B cell (primary cell): ENCODE measurements at regions of chr1 and their contacts with region 1.

Region 1: DNA sequence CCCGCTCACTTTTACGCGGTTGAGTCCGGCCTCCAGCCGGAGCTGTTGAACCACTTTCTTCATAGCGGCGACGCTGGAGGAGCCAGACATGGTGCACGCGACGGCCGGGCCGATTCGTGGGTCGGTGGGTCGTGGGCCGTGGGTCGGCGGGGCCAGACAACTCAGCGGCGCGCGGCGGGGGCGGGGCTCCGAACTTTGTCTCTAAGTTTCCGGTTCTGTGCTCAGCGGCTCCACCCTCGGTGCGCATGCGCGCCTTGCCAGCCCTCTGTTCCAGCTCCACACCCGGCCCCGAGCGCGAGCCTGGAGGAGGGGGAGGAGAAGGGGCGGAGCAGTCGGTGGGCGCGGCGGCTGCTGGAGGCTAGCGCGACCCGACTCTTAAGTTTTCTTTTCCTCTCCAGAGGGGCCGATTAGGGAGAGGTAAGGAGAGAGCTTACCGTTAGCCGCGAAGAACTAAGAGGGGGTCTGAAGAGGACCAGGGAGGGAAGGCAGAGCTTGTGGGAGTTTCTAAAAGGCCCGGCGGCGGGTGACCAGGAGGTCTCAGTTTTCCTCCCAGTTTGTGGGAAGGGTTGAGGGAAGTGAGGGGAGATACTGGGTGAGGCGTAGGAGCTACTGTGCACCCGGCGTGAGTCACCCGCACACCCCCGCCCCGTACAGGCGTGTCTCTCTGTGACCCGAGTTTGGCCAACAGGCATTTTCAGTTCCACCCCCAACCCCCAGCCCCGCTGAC is at the starts of genes GNG5 and SPATA1:
- DNase-seq: peak; percentile 98
- ATAC-seq: peak; percentile 88
- H3K4me3 ChIP-seq: peak within 1 kb of the TSS; percentile 82 to 98 (median 90)
- H3K4me3 Mint-ChIP-seq: peak within 1 kb of the TSS; percentile 95
- H3K27ac ChIP-seq: peak within 1 kb of the TSS; percentile 82 to 89
- H3K27ac Mint-ChIP-seq: peak within 1 kb of the TSS; percentile 98
- H3K4me1 ChIP-seq: peaks cover 23 to 27% of the 10 kb centered on the region in 2 donors
- H3K4me1 Mint-ChIP-seq: peaks cover 35% of the 10 kb centered on the region
- H3K27me3 ChIP-seq: no peaks in the 10 kb centered on the region
- H3K27me3 Mint-ChIP-seq: no peaks in the 10 kb centered on the region
- CTCF ChIP-seq: no peak
- total RNA-seq, gene GNG5: 36.0 and 41.6 TPM in 2 replicates
- total RNA-seq, gene SPATA1: 6.4 and 8.6 TPM in 2 replicates

Region 2: GRCh38 chr1:83860490-83861221 is 645.5 kb before region 1 on chr1:
- CTCF ChIA-PET with region 1: no interaction called
- POLR2A ChIA-PET with region 1: no interaction called
- intact Hi-C with region 1: no loop called
- DNase-seq: peak; percentile 80
- ATAC-seq: peak; percentile 85
- H3K4me3 ChIP-seq: peak overlapping the region; percentile 21 to 86 (median 75)
- H3K4me3 Mint-ChIP-seq: peak overlapping the region; percentile 84
- H3K27ac ChIP-seq: peak overlapping the region; percentile 73 to 94
- H3K27ac Mint-ChIP-seq: peak overlapping the region; percentile 84
- H3K4me1 ChIP-seq: peaks cover 2 to 8% of the 10 kb centered on the region in 2 donors
- H3K4me1 Mint-ChIP-seq: peaks cover 9% of the 10 kb centered on the region
- H3K27me3 ChIP-seq: no peaks in the 10 kb centered on the region
- H3K27me3 Mint-ChIP-seq: no peaks in the 10 kb centered on the region
- CTCF ChIP-seq: peak; percentile 86

Region 3: DNA sequence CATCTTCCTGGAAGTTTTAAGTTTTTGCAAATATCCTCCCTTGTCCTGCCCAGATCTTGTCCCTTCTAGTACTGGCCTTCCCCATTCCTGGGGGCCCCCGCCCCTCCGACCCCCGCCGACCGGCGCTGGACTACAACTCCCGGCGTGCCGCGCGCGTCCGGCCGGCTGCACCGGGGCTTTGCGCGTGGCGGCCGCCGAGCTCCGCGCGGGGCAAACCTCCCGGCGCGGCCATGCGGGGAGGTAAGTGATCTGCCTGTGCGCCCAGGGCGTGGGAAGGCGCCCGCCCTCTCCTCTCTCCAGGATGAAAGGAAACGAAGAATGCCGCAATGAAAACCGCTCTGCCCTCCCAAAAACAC is 207.9 kb before region 1 on chr1:
- CTCF ChIA-PET with region 1: no interaction called
- POLR2A ChIA-PET with region 1: no interaction called
- intact Hi-C with region 1: loop called (anchors 1 kb)
- DNase-seq: no peak
- ATAC-seq: peak; percentile 87
- H3K4me3 ChIP-seq: peak overlapping the region; percentile 66 to 86 (median 84)
- H3K4me3 Mint-ChIP-seq: peak overlapping the region; percentile 94
- H3K27ac ChIP-seq: no peak overlapping the region
- H3K27ac Mint-ChIP-seq: peak overlapping the region; percentile 69
- H3K4me1 ChIP-seq: peaks cover 31 to 32% of the 10 kb centered on the region in 2 donors
- H3K4me1 Mint-ChIP-seq: peaks cover 36% of the 10 kb centered on the region
- H3K27me3 ChIP-seq: peaks cover 0 to 15% (median 9%) of the 10 kb centered on the region in 4 experiments
- H3K27me3 Mint-ChIP-seq: peaks cover 20% of the 10 kb centered on the region
- CTCF ChIP-seq: no peak

Region 4: GRCh38 chr1:84442256-84442655 is 63.9 kb before region 1 on chr1:
- CTCF ChIA-PET with region 1: no interaction called
- POLR2A ChIA-PET with region 1: no interaction called
- intact Hi-C with region 1: loop called (anchors 1 kb)
- DNase-seq: peak; percentile 80
- ATAC-seq: peak; percentile 94
- H3K4me3 ChIP-seq: no peak overlapping the region
- H3K4me3 Mint-ChIP-seq: no peak overlapping the region
- H3K27ac ChIP-seq: no peak overlapping the region
- H3K27ac Mint-ChIP-seq: no peak overlapping the region
- H3K4me1 ChIP-seq: peaks cover 18 to 23% of the 10 kb centered on the region in 2 donors
- H3K4me1 Mint-ChIP-seq: peaks cover 18% of the 10 kb centered on the region
- H3K27me3 ChIP-seq: peaks cover 0 to 4% (median 0%) of the 10 kb centered on the region in 4 experiments
- H3K27me3 Mint-ChIP-seq: peaks cover 8% of the 10 kb centered on the region
- CTCF ChIP-seq: peak; percentile 73

Region 5: GRCh38 chr1:84541679-84542078 is 35.5 kb after region 1 on chr1:
- CTCF ChIA-PET with region 1: no interaction called
- POLR2A ChIA-PET with region 1: no interaction called
- intact Hi-C with region 1: loop called (anchors 5 kb)
- DNase-seq: peak; percentile 8
- ATAC-seq: no peak
- H3K4me3 ChIP-seq: no peak overlapping the region
- H3K4me3 Mint-ChIP-seq: no peak overlapping the region
- H3K27ac ChIP-seq: no peak overlapping the region
- H3K27ac Mint-ChIP-seq: no peak overlapping the region
- H3K4me1 ChIP-seq: peaks cover 0 to 2% of the 10 kb centered on the region in 2 donors
- H3K4me1 Mint-ChIP-seq: peaks cover 13% of the 10 kb centered on the region
- H3K27me3 ChIP-seq: no peaks in the 10 kb centered on the region
- H3K27me3 Mint-ChIP-seq: no peaks in the 10 kb centered on the region
- CTCF ChIP-seq: no peak

Region 6: DNA sequence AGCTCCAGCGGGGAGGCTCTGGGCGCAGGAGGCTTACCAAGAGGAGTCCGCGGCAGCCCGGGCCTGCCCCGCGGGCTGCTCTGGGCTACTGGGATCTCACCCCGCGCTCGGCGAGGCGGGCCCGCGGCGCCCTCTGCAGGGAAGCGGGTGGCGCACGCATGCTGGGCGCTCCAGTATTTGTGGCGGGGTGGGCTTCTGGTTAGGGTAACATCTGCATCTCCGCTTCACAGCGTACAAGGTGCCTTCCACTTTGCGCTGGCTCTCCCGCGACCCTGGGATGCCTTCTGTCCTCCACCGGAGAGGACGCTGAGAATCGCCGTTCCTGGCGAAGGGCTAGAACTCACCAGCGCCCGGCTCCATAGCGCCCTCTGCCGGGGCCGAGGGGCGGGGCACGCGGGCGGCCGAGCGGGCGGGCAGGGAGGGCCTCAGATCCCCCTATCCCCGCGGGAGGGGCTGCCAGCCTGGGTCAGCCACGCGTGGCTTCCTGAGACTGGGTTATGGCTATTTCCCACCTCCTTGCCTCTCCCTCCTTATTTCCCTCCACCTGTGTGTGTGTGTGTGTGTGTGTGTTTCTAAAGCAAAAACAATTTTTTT is 114.7 kb after region 1 on chr1:
- CTCF ChIA-PET with region 1: interaction called, 4 read pairs
- POLR2A ChIA-PET with region 1: interaction called, 3 read pairs
- intact Hi-C with region 1: loop called (anchors 1 kb)
- DNase-seq: peak; percentile 90
- ATAC-seq: peak; percentile 92
- H3K4me3 ChIP-seq: peak overlapping the region in 4 of 5 experiments; percentile 59 to 84 (median 72)
- H3K4me3 Mint-ChIP-seq: peak overlapping the region; percentile 96
- H3K27ac ChIP-seq: no peak overlapping the region
- H3K27ac Mint-ChIP-seq: peak overlapping the region; percentile 69
- H3K4me1 ChIP-seq: peaks cover 0 to 4% of the 10 kb centered on the region in 2 donors
- H3K4me1 Mint-ChIP-seq: peaks cover 6% of the 10 kb centered on the region
- H3K27me3 ChIP-seq: peaks cover 0 to 5% (median 0%) of the 10 kb centered on the region in 4 experiments
- H3K27me3 Mint-ChIP-seq: peaks cover 6% of the 10 kb centered on the region
- CTCF ChIP-seq: peak; percentile 100

Region 7: DNA sequence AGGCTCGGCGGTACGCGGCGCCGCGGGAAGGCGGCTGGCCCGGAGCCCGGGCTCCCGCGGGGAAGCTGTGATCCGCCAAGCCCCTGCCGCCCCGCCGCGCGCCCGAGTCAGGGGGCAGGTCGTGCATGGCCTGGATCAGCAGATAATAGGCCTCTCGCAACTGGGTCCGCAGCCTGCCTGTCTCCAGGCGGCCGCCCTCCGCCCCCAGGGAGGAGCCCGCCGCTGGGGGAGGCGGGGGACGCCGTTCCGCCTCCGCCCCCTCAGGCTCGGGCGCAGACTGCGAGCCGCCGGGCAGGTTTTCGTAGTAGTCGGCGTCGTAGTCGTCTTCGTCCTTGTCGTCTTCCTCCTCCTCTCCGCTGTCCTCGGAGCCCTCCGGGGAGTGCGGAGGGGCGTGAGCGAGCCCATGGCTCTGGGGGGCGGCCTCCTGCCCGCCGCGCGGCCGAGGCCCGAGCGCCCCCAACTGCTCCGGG is 694.7 kb after region 1 on chr1 and contains the start of gene SYDE2:
- CTCF ChIA-PET with region 1: no interaction called
- POLR2A ChIA-PET with region 1: no interaction called
- intact Hi-C with region 1: loop called (anchors 10 kb)
- DNase-seq: peak; percentile 86
- ATAC-seq: peak; percentile 83
- H3K4me3 ChIP-seq: peak within 1 kb of the TSS; percentile 46 to 73 (median 62)
- H3K4me3 Mint-ChIP-seq: peak within 1 kb of the TSS; percentile 98
- H3K27ac ChIP-seq: peak within 1 kb of the TSS in 1 of 2 donors; percentile 85
- H3K27ac Mint-ChIP-seq: peak within 1 kb of the TSS; percentile 93
- H3K4me1 ChIP-seq: peaks cover 16 to 26% of the 10 kb centered on the region in 2 donors
- H3K4me1 Mint-ChIP-seq: peaks cover 15% of the 10 kb centered on the region
- H3K27me3 ChIP-seq: peaks cover 0 to 35% (median 25%) of the 10 kb centered on the region in 4 experiments
- H3K27me3 Mint-ChIP-seq: peaks cover 42% of the 10 kb centered on the region
- CTCF ChIP-seq: no peak
- total RNA-seq, gene SYDE2: 0.89 and 1.0 TPM in 2 replicates